ENCODE measurements at regions of chr12 and their contacts with region 1.

Region 1: DNA sequence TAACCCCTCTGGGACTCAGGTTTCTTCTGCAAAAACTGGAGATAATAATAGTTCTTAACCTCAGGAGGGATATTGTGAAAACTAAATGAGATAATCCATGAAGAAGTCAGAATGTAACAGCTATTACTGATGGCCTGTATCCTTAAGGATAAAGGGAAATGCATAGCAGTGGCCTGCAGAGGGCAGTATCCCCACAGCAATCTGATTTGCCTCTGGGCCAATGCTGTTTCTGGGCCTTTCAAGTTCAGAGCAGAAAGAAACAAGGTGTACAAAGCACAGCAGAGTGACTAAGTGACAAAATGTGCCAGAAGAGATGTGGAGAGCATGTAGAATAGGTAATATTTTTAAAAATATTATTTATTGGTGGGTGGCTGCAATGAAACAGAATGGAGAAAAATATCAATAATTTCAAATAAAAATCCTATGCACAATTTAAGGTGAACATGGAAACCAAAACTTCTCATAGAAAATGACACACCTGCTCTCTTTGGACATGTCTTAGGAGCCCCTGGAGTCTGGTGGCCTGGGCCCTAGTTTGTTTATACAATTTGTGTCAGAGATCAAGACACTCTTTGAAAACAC is 90.3 kb downstream of the C12orf75 start:
- DNase-seq: peak in 5 of 6 donors; percentile 43 to 81 (median 64)
- ATAC-seq: peak; percentile 92 to 99 (median 97)
- H3K4me3 ChIP-seq: no peak overlapping the region
- H3K27ac ChIP-seq: no peak overlapping the region
- H3K4me1 ChIP-seq: no peaks in the 10 kb centered on the region
- H3K27me3 ChIP-seq: no peaks in the 10 kb centered on the region
- CTCF ChIP-seq: peak; percentile 74 to 92 (median 80)

Region 2: DNA sequence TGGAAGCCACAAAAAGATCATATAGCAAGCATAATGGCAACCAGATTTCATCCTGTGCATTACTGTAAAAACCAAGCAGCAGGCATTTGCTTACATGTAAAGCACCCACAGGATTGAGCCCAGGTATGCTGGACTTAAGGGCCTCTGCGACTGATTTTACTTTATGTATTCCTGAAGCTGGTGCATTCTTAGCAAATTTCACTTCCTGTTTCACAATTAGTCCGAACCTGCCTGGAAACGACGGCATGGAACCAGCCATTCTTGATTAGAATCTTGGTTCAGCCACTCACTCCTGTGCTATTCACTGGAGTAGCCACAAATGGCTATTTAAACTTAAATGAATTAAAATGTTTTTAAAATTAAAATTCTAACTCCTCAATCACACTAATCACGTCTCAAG is 478.8 kb after region 1 on chr12:
- intact Hi-C with region 1: no loop called
- DNase-seq: no peak
- ATAC-seq: no peak
- H3K4me3 ChIP-seq: no peak overlapping the region
- H3K27ac ChIP-seq: no peak overlapping the region
- H3K4me1 ChIP-seq: no peaks in the 10 kb centered on the region
- H3K27me3 ChIP-seq: no peaks in the 10 kb centered on the region
- CTCF ChIP-seq: no peak

Region 3: DNA sequence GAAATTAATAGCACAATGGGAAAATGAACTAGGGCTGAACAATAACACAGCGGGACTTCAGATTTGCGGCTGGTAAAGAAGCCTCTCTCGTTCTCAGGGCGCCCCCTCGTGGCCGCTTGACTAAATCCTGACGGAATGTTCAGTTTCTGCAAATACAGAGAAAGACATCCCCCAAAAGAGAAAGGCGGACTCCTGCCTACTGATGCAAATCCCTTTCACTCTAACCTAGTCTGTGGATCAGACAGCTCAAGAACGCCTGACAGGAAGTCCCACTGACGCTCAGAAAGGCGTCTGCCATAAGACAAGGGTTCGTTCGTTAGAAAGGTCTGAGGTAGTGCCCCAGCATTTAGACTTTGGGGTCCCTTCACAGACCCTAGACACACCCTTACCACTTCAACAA is 715.5 kb after region 1 on chr12:
- intact Hi-C with region 1: loop called in 2 of 3 experiments (anchors 10 kb)
- DNase-seq: peak; percentile 61 to 98 (median 85)
- ATAC-seq: peak in 3 of 4 donors; percentile 22 to 49 (median 44)
- H3K4me3 ChIP-seq: peak overlapping the region in 1 of 4 donors; percentile 17
- H3K27ac ChIP-seq: no peak overlapping the region
- H3K4me1 ChIP-seq: peaks cover 0 to 14% (median 4%) of the 10 kb centered on the region in 3 donors
- H3K27me3 ChIP-seq: no peaks in the 10 kb centered on the region
- CTCF ChIP-seq: peak; percentile 68 to 89 (median 76)

Region 4: DNA sequence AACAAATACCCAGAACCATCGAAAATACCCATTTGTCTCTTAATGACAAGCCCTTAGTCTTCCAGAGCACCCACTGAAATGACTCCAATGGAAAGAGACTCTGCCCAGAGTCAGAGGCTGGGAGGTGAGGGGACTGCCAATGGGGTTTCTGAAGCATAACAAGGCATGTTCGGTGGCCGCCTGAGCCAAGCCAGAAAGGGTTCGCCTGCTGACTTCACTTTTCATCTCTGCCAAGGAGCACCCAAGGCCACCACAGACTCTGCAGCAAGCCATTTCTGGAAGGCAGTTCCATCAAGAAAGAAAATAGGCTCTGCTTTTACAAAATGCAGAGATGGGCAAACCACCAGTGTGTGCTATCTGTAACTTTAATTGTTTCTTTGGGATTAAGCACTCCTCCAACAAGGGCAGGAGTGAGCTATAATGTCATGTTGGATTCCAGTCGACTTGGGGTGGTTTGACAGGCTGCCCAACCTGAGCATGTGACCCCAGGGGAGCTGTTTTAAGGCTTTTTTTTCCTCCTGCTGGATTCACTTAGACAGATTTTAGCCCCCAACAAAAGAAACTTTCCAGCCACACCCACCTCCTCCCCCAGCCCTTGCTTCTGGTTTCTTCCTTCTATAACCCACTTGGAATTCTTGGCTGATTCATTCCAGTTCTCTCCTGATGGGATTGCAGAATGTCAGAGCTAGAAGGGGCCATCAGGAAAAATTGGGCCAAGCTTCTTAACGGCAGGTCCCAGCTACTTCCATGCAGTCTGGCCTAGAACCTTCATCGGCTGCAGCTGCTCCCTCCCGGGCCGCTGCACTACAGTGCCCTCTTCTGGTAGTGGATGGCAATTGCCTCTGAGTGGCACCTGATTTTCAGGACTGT is 803.0 kb after region 1 on chr12:
- intact Hi-C with region 1: loop called in 2 of 3 experiments (anchors 5 to 10 kb)
- DNase-seq: peak; percentile 42 to 83 (median 74)
- ATAC-seq: peak; percentile 88 to 96 (median 89)
- H3K4me3 ChIP-seq: no peak overlapping the region
- H3K27ac ChIP-seq: no peak overlapping the region
- H3K4me1 ChIP-seq: peaks cover 0 to 3% (median 0%) of the 10 kb centered on the region in 3 donors
- H3K27me3 ChIP-seq: no peaks in the 10 kb centered on the region
- CTCF ChIP-seq: peak; percentile 82 to 97 (median 94)